Activated T-helper 1 cell treated with anti-CD3 and anti-CD28 coated beads, Interleukin-12 subunit alpha, Interleukin-12 subunit beta, Interleukin-2, Interleukin-4 antibody, amounts not matched to agents 30 ng/mL and 10 ng/mL and 1 ng/mL, durations not matched to agents 14 hours and 24 hours and 36 hours (primary cell): ENCODE measurements at regions of chr6 and their contacts with region 1.

Region 1: GRCh38 chr6:110873981-110874879 is at the start of gene AMD1:
- DNase-seq: peak; percentile 94
- H3K4me3 Mint-ChIP-seq: peak within 1 kb of the TSS; percentile 97
- H3K27ac Mint-ChIP-seq: peak within 1 kb of the TSS; percentile 98
- H3K4me1 Mint-ChIP-seq: peaks cover 37% of the 10 kb centered on the region
- H3K27me3 Mint-ChIP-seq: no peaks in the 10 kb centered on the region
- total RNA-seq, gene AMD1: 101 and 109 TPM in 2 replicates

Region 2: DNA sequence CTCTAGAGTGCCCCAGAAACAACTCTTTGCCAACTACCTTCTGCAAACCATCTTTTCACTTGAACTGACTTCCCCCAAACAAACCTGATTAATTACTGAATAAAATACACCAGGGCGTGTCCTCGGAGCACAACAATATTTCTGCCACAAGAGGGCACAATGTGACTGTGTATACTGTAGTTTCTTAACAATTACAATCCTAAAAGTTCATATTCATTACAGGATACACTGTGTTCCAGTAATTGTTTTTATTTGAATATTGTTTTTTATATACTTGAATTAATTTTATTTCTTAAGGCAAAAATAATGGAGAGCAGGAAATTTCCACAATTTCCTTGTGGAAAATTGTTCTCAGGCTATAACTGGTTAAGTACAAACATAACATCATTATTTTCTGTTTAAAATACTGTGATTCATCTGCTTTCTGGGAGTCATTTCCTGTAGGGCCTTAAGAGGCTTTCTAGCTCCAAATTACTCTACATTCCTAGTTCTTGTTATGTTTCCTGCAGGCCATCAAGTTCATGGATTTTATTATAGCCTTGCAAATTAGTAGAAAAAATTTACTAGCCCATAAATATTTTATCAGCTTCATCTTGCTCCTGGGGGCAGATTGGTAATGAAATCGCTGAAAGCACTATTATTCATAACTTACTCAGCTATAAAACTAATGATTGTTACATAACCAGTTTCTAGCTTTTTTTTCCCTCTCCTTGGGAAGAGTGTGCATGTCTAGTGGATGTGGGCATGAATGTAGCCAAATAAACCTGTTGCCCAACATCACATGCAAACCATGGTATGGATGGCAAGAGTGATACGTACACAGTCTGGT is 345.9 kb before region 1 on chr6:
- intact Hi-C with region 1: loop called (anchors 1 kb)
- DNase-seq: peak; percentile 24
- H3K4me3 Mint-ChIP-seq: no peak overlapping the region
- H3K27ac Mint-ChIP-seq: no peak overlapping the region
- H3K4me1 Mint-ChIP-seq: peaks cover 9% of the 10 kb centered on the region
- H3K27me3 Mint-ChIP-seq: peaks cover 8% of the 10 kb centered on the region

Region 3: DNA sequence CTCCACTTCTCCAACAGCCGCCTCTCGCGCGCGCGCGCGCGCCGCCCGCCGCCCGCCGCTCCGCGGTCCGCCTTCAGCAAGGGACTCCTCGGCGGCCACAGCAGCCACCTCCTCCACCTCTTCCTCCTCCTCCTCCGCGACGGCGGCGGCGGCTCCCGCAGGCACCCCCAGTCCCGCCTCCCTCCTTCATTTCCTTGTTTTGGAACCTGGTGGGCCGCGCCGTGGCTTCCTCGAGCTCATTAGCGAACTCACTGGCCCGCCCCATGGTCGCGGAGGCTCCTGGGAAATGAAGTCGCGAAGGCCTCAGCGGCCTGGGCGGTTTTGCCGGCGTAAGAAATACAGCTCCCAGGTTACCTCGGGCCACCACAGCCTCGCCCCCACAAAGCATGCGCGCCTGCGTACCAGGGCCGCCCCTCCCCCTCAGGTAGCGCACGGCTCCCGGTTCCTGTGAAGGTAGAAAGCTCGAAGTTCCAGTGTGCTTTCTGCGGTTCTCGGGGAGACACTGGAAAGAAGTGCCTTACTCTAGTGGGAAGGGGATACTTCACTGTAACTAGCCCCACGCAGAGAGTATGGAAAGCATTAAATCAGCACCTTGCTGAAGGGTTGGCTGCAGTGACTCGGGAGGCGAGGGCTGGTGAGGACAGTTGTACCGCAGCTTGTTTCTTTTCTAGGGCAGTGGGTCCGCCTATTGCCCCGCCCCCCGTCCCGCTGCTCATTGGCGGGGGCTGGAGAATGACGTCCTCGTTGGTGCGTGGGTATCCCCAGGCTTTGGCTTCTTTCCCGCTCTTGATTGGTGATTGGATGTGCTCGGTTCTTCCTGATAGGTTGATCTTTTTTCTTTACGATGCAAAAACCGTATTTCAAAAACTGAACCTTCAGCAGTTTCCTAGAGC is 58.8 kb before region 1 on chr6 and contains the start of gene CDK19:
- intact Hi-C with region 1: loop called (anchors 1 kb)
- DNase-seq: peak; percentile 97
- H3K4me3 Mint-ChIP-seq: peak within 1 kb of the TSS; percentile 97
- H3K27ac Mint-ChIP-seq: peak within 1 kb of the TSS; percentile 98
- H3K4me1 Mint-ChIP-seq: peaks cover 38% of the 10 kb centered on the region
- H3K27me3 Mint-ChIP-seq: no peaks in the 10 kb centered on the region
- total RNA-seq, gene CDK19: 12.4 and 13.7 TPM in 2 replicates

Region 4: DNA sequence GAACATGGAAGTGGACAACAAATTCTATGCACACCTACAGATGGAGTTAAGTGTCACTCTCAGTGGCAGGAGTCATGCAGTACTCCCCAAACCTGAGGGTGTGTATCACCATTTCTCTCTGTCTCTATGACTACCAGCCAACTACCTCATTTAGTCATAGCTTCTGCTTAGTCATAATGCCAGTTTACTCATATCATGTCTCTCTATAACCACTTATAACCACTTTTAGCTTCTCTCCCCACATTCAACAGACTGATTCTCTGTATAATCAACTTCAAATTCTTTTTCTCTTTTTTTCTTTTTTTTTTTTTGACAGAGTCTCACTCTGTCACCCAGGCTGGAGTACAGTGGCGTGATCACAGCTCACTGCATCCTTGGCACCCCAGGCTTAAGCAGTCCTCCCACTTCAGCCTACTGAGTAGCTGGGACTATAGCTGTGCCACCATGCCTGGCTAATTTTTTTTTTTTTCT is 70.5 kb after region 1 on chr6:
- intact Hi-C with region 1: loop called (anchors 1 kb)
- DNase-seq: peak; percentile 40
- H3K4me3 Mint-ChIP-seq: no peak overlapping the region
- H3K27ac Mint-ChIP-seq: peak overlapping the region; percentile 80
- H3K4me1 Mint-ChIP-seq: peaks cover 11% of the 10 kb centered on the region
- H3K27me3 Mint-ChIP-seq: no peaks in the 10 kb centered on the region

Region 5: GRCh38 chr6:110981202-110981600 is 107.0 kb after region 1 on chr6:
- intact Hi-C with region 1: loop called (anchors 1 kb)
- DNase-seq: no peak
- H3K4me3 Mint-ChIP-seq: peak overlapping the region; percentile 99
- H3K27ac Mint-ChIP-seq: peak overlapping the region; percentile 98
- H3K4me1 Mint-ChIP-seq: peaks cover 14% of the 10 kb centered on the region
- H3K27me3 Mint-ChIP-seq: no peaks in the 10 kb centered on the region

Region 6: GRCh38 chr6:111171577-111172400 is 297.6 kb after region 1 on chr6:
- intact Hi-C with region 1: no loop called
- DNase-seq: no peak
- H3K4me3 Mint-ChIP-seq: no peak overlapping the region
- H3K27ac Mint-ChIP-seq: no peak overlapping the region
- H3K4me1 Mint-ChIP-seq: peaks cover 11% of the 10 kb centered on the region
- H3K27me3 Mint-ChIP-seq: peaks cover 5% of the 10 kb centered on the region